HEK293T (cell line): ENCODE measurements at regions of chr1 and their contacts with region 1.

Region 1: DNA sequence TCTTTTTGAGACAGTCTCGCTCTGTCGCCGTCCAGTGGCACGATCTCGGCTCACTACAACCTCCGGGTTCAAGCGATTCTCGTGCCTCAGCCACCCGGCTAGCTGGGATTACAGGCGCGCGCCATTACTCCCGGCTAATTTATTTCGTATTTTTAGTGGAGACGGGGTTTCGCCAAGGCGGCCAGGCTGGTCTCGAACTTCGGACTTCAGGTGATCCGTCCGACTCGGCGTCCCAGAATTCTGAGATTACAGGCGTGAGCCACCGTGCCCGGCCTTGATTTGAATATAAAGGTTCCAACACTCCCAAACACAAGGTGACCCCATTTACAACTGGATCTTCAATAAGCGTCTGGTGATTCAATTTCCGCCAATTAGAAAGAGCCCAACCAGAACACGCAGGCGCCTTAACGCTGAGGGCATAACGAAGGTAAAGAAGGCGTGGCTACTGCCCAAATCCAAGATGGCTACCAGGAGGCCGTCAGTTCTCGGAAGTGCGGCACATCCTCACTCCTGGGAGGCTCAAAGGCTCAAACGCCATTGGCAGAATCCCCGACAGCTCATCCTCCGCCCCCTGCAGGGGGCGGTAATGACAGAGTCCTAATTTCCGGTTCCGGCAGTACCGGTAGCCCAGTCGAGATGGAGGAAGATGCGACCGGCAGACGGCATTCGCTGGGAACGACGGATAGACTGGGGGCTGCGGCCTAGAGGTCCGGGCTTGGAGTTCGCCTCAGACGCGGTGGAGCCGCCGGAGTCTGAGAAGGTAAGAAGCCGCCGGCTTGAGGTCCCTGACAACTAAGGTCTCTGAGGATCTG is at the start of gene SLC25A44:
- DNase-seq: peak; percentile 98

Region 2: DNA sequence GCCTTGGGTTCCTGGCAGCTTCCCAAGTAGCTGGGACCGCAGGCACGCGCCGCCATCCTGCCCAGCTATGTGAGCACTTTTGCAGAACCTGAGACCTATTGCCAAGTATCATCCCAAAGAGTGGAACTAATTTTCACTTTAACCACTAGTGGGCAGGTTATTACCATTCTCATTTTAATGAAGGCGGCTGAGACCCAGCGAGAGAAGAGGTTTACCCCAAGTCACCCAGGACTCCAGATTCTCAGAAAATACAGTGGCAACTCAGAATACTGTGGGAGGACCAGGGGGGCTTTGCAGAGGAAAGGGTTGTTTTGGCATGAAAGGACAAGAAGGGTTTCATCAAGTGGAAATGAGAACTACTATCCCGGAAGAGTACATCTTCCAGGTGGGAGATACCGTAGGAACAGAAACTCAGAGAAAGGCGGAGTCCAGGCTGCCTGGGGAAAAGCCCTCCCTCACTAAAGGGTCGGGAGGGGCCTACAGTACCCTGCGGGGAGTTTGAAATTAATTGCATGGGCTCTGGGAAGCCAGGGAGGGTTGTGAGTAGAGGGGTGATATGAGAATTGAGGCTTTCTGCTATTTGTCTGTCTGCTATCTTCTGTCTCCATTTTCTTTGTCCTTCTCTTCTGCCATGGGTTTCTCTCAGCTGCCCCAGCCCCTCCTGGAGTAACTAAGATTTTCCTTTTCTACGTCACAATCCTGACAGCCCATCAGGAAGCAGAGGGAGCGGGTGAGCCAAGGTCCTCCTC is 47.5 kb before region 1 on chr1:
- CTCF ChIA-PET with region 1: interaction called, 4 read pairs
- POLR2A ChIA-PET with region 1: interaction called, 11 read pairs
- DNase-seq: peak; percentile 81

Region 3: GRCh38 chr1:156160743-156161171 is 32.9 kb before region 1 on chr1:
- CTCF ChIA-PET with region 1: no interaction called
- POLR2A ChIA-PET with region 1: interaction called, 22 read pairs
- DNase-seq: peak; percentile 93

Region 4: GRCh38 chr1:156204686-156205085 is 11.0 kb after region 1 on chr1:
- CTCF ChIA-PET with region 1: no interaction called
- POLR2A ChIA-PET with region 1: interaction called, 16 read pairs
- DNase-seq: no peak